ENCODE measurements at regions of chr16 and their contacts with region 1.

Region 1: GRCh38 chr16:3134564-3135417 is at the start of gene ZNF213:
- DNase-seq: peak; percentile 96
- H3K4me3 Mint-ChIP-seq: peak within 1 kb of the TSS; percentile 97
- H3K27ac Mint-ChIP-seq: peak within 1 kb of the TSS; percentile 88
- H3K4me1 Mint-ChIP-seq: peaks cover 38% of the 10 kb centered on the region
- H3K27me3 Mint-ChIP-seq: no peaks in the 10 kb centered on the region
- total RNA-seq, gene ZNF213: 10.5 to 11.6 TPM

Region 2: GRCh38 chr16:2829501-2830356 is 305.1 kb before region 1 on chr16 and contains the start of gene ZG16B:
- CTCF ChIA-PET with region 1: no interaction called
- POLR2A ChIA-PET with region 1: no interaction called
- DNase-seq: no peak
- H3K4me3 Mint-ChIP-seq: peak within 1 kb of the TSS; percentile 32
- H3K27ac Mint-ChIP-seq: peak within 1 kb of the TSS; percentile 48
- H3K4me1 Mint-ChIP-seq: peaks cover 10% of the 10 kb centered on the region
- H3K27me3 Mint-ChIP-seq: no peaks in the 10 kb centered on the region
- total RNA-seq, gene ZG16B: 8.8 to 9.8 TPM

Region 3: GRCh38 chr16:3059000-3059722 is 75.6 kb before region 1 on chr16:
- CTCF ChIA-PET with region 1: interaction called, 177 read pairs
- POLR2A ChIA-PET with region 1: interaction called, 100 read pairs
- DNase-seq: peak; percentile 90
- H3K4me3 Mint-ChIP-seq: peak overlapping the region; percentile 79
- H3K27ac Mint-ChIP-seq: peak overlapping the region; percentile 95
- H3K4me1 Mint-ChIP-seq: peaks cover 74% of the 10 kb centered on the region
- H3K27me3 Mint-ChIP-seq: no peaks in the 10 kb centered on the region

Region 4: GRCh38 chr16:3074860-3075522 is 59.8 kb before region 1 on chr16:
- CTCF ChIA-PET with region 1: interaction called, 62 read pairs
- POLR2A ChIA-PET with region 1: interaction called, 35 read pairs
- DNase-seq: peak; percentile 94
- H3K4me3 Mint-ChIP-seq: peak overlapping the region; percentile 77
- H3K27ac Mint-ChIP-seq: peak overlapping the region; percentile 100
- H3K4me1 Mint-ChIP-seq: peaks cover 88% of the 10 kb centered on the region
- H3K27me3 Mint-ChIP-seq: no peaks in the 10 kb centered on the region

Region 5: DNA sequence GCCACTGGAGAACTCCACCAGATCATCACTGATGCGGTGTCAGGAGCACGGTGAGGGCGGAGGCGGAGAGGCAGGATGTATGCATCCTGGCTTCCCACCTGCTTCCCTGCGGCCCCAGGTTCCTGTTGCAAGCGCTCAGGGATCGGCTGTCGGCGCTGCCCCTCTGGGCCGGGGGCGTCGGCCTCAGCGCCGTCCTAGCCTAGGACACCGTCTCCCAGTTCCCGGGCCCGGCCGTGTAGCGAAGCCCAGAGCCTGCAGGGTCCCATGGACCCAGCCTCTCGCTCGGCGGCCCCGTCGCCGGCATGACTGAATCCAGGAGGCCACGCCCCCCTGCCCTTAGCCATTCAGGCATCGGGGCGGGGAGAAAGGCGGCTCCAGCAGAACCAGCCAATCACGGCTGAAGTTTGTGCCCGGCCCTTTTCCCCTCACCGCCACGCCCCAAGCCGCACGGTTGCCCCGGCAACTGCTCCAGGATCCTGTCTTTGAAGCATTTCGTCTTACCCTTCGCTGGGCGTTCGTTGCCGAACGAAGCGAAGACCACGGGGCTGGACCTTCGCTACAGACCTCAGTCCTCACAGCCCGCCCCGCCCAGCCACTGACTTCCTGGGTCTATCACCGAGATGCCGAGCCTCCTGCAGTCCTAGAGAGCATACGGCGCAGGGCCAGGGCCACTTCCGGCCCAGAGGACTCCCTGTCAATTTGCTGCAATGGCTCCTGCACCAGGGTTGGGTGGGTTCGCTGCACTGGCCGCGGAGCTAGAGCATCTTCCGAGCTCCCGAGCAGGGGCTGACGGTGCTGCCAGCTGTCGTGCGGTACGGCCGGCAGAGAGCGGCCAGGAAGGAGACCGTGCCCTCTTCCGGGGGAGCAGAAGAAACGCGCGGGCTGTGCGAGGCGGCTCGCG is 10.6 kb before region 1 on chr16:
- CTCF ChIA-PET with region 1: interaction called, 10 read pairs
- POLR2A ChIA-PET with region 1: interaction called, 32 read pairs
- DNase-seq: peak; percentile 98
- H3K4me3 Mint-ChIP-seq: peak overlapping the region; percentile 88
- H3K27ac Mint-ChIP-seq: peak overlapping the region; percentile 98
- H3K4me1 Mint-ChIP-seq: peaks cover 48% of the 10 kb centered on the region
- H3K27me3 Mint-ChIP-seq: no peaks in the 10 kb centered on the region

Region 6: GRCh38 chr16:3158471-3159314 is 23.9 kb after region 1 on chr16:
- CTCF ChIA-PET with region 1: interaction called, 33 read pairs
- POLR2A ChIA-PET with region 1: interaction called, 20 read pairs
- DNase-seq: peak; percentile 96
- H3K4me3 Mint-ChIP-seq: peak overlapping the region; percentile 91
- H3K27ac Mint-ChIP-seq: peak overlapping the region; percentile 95
- H3K4me1 Mint-ChIP-seq: peaks cover 44% of the 10 kb centered on the region
- H3K27me3 Mint-ChIP-seq: peaks cover 23% of the 10 kb centered on the region

Region 7: DNA sequence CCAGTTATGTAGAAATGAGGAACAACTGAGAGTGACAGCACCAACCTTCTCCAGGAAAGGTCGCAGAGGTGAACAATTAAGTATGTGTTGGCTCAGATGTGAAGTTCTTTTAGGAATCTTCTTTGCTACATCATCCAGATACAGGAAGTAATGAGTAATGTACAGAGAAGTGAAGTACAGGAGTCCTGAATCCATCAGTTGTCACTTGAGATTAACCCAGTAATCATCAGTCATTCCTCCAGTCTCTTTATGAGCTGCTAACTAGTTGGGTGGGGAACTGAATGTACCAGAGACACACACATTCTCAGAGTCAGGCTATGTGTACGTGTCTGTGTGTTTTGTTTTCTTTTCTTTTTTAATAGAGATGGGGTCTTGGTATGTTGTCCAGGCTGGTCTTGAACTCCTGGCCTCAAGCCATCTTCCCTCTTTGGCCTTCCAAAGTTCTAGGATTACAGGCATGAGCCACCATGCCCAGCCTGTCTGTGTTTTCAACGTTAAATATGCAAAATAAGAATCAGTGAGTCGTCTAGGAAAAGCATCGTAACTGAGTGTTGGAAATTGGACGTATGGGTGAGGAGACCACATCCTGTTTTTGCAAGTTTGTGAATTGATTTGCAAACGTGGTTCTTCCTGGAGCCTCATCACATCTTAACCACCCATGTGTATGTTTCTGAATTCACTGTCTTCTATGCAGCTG is 80.3 kb after region 1 on chr16:
- CTCF ChIA-PET with region 1: no interaction called
- POLR2A ChIA-PET with region 1: no interaction called
- DNase-seq: peak; percentile 61
- H3K4me3 Mint-ChIP-seq: peak overlapping the region; percentile 35
- H3K27ac Mint-ChIP-seq: peak overlapping the region; percentile 99
- H3K4me1 Mint-ChIP-seq: peaks cover 35% of the 10 kb centered on the region
- H3K27me3 Mint-ChIP-seq: no peaks in the 10 kb centered on the region

Measured in activated CD4-positive, alpha-beta memory T cell treated with anti-CD3 and anti-CD28 coated beads, Interleukin-2, amount 10 ng/mL, durations not matched to agents 7 days and 5 days (primary cell).